CD4-positive, alpha-beta memory T cell (primary cell): ENCODE measurements at regions of chr3 and their contacts with region 1.

Region 1: DNA sequence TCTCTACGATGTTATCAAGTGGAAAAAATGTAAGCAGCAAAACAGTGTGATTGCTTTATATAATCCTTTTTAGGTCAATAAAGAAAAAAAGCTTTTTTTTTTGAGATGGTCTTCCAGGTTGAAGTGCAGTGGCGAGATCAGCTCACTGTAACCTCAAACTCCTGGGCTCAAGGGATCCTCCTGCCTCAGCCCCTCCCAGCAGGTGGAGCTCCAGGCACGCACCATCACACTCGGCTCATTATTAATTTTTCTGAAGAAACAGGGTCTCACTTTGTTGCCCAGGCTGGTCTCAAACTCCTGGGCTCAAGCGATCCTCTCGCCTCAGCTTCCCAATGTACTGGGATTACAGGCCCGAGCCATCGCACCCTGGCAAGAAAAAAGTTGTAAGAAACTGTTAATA is 17.3 kb downstream of the RNF168 start:
- DNase-seq: peak in 3 of 5 donors; percentile 9 to 21 (median 15)
- H3K4me3 ChIP-seq: no peak overlapping the region
- H3K4me3 Mint-ChIP-seq: peak overlapping the region in 1 of 8 donors; percentile 43
- H3K27ac ChIP-seq: no peak overlapping the region
- H3K27ac Mint-ChIP-seq: no peak overlapping the region
- H3K4me1 ChIP-seq: peaks cover 10% of the 10 kb centered on the region
- H3K4me1 Mint-ChIP-seq: peaks cover 8 to 21% (median 13%) of the 10 kb centered on the region in 4 donors
- H3K27me3 ChIP-seq: no peaks in the 10 kb centered on the region
- H3K27me3 Mint-ChIP-seq: no peaks in the 10 kb centered on the region

Region 2: GRCh38 chr3:196502775-196503195 is 16.5 kb after region 1 on chr3:
- CTCF ChIA-PET with region 1: interaction called, 14 read pairs
- POLR2A ChIA-PET with region 1: interaction called, 3 read pairs
- intact Hi-C with region 1: no loop called
- DNase-seq: peak; percentile 70 to 87 (median 73)
- H3K4me3 ChIP-seq: peak overlapping the region; percentile 70 to 79
- H3K4me3 Mint-ChIP-seq: peak overlapping the region; percentile 97 to 100 (median 98)
- H3K27ac ChIP-seq: peak overlapping the region; percentile 81
- H3K27ac Mint-ChIP-seq: peak overlapping the region; percentile 94 to 99 (median 97)
- H3K4me1 ChIP-seq: peaks cover 27% of the 10 kb centered on the region
- H3K4me1 Mint-ChIP-seq: peaks cover 25 to 56% (median 38%) of the 10 kb centered on the region in 4 donors
- H3K27me3 ChIP-seq: no peaks in the 10 kb centered on the region
- H3K27me3 Mint-ChIP-seq: no peaks in the 10 kb centered on the region

Region 3: GRCh38 chr3:196518966-196519717 is 32.9 kb after region 1 on chr3:
- CTCF ChIA-PET with region 1: interaction called, 74 read pairs
- POLR2A ChIA-PET with region 1: no interaction called
- intact Hi-C with region 1: loop called (anchors 1 kb)
- DNase-seq: peak; percentile 39 to 62 (median 48)
- H3K4me3 ChIP-seq: no peak overlapping the region
- H3K4me3 Mint-ChIP-seq: no peak overlapping the region
- H3K27ac ChIP-seq: no peak overlapping the region
- H3K27ac Mint-ChIP-seq: peak overlapping the region in 2 of 7 donors; percentile 65 to 74
- H3K4me1 ChIP-seq: no peaks in the 10 kb centered on the region
- H3K4me1 Mint-ChIP-seq: no peaks in the 10 kb centered on the region
- H3K27me3 ChIP-seq: no peaks in the 10 kb centered on the region
- H3K27me3 Mint-ChIP-seq: peaks cover 0 to 2% of the 10 kb centered on the region in 2 donors